Psoas muscle (tissue), 8 donors: ENCODE measurements at regions of chr1 and their contacts with region 1.

Region 1: DNA sequence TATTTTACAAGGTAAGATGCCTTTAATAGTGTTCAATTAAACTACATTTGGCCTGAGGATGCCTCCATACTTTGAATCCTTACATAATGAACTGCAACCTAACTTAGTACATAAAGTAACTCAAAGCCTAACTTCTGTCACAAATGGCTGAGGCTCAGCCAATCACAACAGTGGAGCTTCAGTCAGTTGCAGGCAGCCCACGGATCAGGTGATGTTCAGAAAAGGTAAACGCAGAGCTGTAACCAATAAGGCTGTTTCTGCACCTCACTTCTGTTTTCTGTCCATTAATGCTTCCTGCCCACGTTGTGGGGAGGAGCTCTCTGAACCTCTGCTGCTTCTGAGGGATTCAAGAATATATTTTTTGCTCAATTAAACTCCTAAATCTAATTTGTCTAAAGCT is 94.8 kb upstream of the KIAA0040 start:
- DNase-seq: no peak
- ATAC-seq: no peak
- H3K4me3 ChIP-seq: no peak overlapping the region
- H3K27ac ChIP-seq: no peak overlapping the region
- H3K4me1 ChIP-seq: no peaks in the 10 kb centered on the region
- H3K27me3 ChIP-seq: no peaks in the 10 kb centered on the region
- CTCF ChIP-seq: no peak

Region 2: DNA sequence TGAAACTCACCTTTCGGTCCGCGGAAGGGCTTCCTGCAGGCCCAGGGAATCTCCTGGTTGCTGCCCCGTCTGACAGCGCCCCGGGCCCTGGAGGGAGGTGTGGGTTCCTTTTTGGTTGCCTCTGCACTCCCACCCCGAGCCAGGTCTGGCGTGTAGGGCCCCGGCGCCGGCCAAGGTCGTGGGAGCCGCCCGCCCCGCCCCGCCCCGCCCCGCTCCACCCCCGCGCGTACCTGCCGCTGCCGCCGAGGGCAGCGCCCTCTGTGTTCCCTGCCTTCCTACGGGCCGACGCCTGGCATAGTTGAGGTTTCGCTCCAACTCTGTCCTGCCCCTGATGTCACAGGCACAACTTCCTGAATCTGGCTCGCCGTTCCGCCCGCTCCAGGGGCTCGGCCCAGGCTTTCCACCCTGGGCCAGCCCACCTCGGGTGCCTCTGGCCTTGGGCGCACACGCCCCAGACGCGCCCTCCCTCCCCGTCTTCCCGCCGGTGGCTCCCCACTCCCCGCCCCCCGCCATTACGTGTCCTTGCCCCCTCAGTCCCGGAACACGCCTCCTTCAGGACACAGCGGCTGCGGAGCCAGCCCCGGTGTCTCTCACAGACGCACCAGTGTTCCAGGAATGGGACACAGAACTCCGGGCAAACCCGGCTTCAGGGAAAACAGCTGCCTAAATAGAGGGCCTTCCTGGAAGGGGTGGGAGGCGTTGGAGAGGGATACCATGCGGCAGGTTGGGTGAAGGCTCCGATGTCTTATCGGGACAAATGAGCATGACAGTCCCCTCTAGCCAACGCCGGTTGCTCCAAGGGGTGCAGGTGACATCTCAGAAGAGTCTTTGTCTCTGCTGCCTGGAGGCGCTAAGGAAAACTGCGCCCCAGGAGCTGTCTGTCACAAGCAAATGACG is 94.5 kb before region 1 on chr1 and contains the start of gene KIAA0040:
- intact Hi-C with region 1: loop called in 1 of 2 experiments (anchors 5 kb)
- DNase-seq: peak; percentile 81 to 88
- ATAC-seq: peak; percentile 83 to 84 (median 84)
- H3K4me3 ChIP-seq: peak within 1 kb of the TSS; percentile 86
- H3K27ac ChIP-seq: peak within 1 kb of the TSS; percentile 72
- H3K4me1 ChIP-seq: peaks cover 28% of the 10 kb centered on the region
- H3K27me3 ChIP-seq: no peaks in the 10 kb centered on the region
- CTCF ChIP-seq: no peak
- total RNA-seq, gene KIAA0040: 6.2 to 18.4 (median 14.6) TPM